ENCODE measurements at regions of chr18 and their contacts with region 1.

Region 1: DNA sequence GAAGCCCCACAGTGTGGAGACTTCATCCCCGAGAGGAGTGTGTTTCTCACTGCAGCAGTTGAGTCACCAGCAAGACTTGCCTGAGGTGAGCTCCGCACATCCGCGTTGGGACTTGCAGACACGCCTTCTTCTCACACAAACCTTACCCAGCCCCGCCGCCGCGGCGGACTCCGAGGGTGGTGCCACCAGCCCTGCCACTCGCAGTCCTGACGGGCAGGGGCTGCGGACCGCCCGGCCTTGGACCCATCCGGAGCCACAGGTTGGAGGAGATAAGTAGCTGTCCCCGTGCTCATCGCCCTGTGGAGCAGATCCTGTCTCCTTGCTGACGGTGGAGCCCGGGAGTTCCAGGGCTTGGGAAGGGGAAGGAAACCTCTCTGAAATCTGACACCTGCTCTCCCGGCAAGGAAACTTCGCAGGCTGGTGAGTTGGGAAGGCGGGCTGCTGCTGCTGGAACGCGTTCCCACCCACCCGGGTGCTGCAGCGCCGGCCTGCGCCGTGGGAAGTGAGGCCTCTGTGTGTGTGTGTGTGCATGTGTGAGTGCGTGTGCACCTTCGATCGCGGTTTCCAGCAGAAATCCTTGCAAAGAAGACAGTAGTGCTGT is at the start of gene RAB27B:
- DNase-seq: peak; percentile 94
- H3K4me3 Mint-ChIP-seq: peak within 1 kb of the TSS; percentile 92
- H3K27ac Mint-ChIP-seq: peak within 1 kb of the TSS; percentile 75
- H3K4me1 Mint-ChIP-seq: peaks cover 60% of the 10 kb centered on the region
- H3K27me3 Mint-ChIP-seq: no peaks in the 10 kb centered on the region
- CTCF ChIP-seq: no peak
- total RNA-seq, gene RAB27B: 32.2 and 73.5 TPM in 2 replicates

Region 2: DNA sequence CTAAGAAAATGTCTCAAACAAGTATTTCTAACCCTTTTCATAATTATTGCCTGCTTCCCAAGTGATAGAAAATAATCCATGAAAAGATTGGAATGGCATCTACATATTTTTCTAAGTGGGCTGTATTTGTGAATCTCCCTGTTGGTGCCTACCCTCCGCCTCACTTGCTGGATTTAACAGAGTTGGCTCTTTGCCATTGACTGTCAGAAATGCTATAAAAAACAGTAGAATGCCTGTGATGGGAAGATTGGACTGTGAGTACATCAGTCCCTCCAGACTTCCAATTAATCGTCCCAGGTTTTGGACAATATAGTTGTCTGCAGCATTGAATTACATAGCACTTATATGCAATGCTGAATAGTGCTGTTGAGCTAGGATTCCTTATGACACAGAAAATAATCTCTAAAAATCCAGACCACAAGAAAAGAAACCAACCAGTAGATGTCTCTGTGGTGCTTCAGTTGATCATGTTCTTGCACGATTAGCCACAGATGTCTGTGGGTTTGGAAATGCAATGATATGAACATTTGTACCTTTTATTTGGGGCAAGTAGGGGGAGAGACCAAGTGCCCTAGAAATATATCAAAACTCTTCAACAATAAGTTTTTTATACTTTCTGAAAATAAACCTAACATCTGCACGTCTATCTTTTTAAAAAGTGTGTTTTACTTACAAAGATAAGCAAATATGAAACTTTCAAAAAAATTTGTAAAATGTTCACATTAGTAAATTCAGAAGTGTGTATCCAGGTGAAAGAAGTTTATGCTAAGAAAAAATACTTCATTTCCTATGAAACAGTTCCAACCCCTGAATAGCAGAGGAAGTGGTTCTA is 148.8 kb before region 1 on chr18:
- CTCF ChIA-PET with region 1: no interaction called
- POLR2A ChIA-PET with region 1: interaction called, 4 read pairs
- intact Hi-C with region 1: loop called (anchors 1 kb)
- DNase-seq: peak; percentile 82
- H3K4me3 Mint-ChIP-seq: no peak overlapping the region
- H3K27ac Mint-ChIP-seq: no peak overlapping the region
- H3K4me1 Mint-ChIP-seq: peaks cover 7% of the 10 kb centered on the region
- H3K27me3 Mint-ChIP-seq: no peaks in the 10 kb centered on the region
- CTCF ChIP-seq: peak; percentile 66

Region 3: GRCh38 chr18:54702686-54703085 is 125.7 kb before region 1 on chr18:
- CTCF ChIA-PET with region 1: no interaction called
- POLR2A ChIA-PET with region 1: no interaction called
- intact Hi-C with region 1: no loop called
- DNase-seq: no peak
- H3K4me3 Mint-ChIP-seq: no peak overlapping the region
- H3K27ac Mint-ChIP-seq: peak overlapping the region; percentile 49
- H3K4me1 Mint-ChIP-seq: peaks cover 5% of the 10 kb centered on the region
- H3K27me3 Mint-ChIP-seq: no peaks in the 10 kb centered on the region
- CTCF ChIP-seq: no peak

Region 4: GRCh38 chr18:54717673-54718407 is 110.5 kb before region 1 on chr18:
- CTCF ChIA-PET with region 1: interaction called, 3 read pairs
- POLR2A ChIA-PET with region 1: interaction called, 33 read pairs
- intact Hi-C with region 1: loop called (anchors 10 kb)
- DNase-seq: no peak
- H3K4me3 Mint-ChIP-seq: no peak overlapping the region
- H3K27ac Mint-ChIP-seq: no peak overlapping the region
- H3K4me1 Mint-ChIP-seq: peaks cover 4% of the 10 kb centered on the region
- H3K27me3 Mint-ChIP-seq: no peaks in the 10 kb centered on the region
- CTCF ChIP-seq: no peak

Region 5: DNA sequence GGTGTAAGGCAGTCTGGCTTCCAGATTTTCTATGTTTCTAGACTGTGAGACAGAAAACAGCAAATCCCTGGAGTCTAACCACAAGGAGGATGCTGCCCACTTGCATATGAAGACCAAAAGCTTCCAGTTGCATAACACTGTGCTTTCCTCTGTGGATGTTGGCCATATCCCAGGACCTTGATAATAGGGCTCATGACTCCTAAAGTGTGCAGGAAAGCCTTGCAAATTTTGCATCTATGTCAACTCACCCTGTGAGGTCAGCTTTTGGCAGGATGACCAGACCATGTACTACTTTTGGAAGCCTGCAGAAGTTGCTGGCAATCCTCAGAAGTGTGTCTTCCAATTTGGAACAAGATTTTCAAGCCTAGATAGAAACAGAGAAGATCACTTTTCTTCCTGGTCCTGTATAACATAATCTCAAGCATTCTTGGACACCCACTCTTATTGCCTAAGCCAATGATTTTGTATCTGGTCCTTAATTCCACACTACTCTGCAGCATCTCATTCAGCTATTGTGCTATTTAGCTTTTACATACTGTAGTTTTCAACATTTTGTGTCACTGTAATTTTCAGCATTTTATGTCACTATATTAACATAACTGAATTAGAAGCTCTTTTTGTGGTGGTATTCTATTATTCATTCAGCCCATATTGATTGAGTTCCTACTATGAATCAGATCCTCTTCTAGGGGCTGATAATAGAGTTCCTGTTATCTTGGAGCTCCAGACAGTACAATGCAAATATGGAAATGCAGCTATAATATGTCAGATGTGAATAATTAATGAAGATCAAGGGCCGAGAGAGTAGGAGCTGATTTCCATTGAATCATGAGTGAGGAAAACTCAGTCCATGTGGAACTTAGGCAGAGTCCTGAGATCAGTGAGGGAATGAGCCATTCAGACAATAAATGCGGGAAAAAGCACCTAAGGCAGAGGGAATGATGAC is 85.4 kb before region 1 on chr18:
- CTCF ChIA-PET with region 1: interaction called, 3 read pairs
- POLR2A ChIA-PET with region 1: interaction called, 42 read pairs
- intact Hi-C with region 1: no loop called
- DNase-seq: peak; percentile 99
- H3K4me3 Mint-ChIP-seq: no peak overlapping the region
- H3K27ac Mint-ChIP-seq: peak overlapping the region; percentile 69
- H3K4me1 Mint-ChIP-seq: peaks cover 45% of the 10 kb centered on the region
- H3K27me3 Mint-ChIP-seq: no peaks in the 10 kb centered on the region
- CTCF ChIP-seq: no peak

Region 6: DNA sequence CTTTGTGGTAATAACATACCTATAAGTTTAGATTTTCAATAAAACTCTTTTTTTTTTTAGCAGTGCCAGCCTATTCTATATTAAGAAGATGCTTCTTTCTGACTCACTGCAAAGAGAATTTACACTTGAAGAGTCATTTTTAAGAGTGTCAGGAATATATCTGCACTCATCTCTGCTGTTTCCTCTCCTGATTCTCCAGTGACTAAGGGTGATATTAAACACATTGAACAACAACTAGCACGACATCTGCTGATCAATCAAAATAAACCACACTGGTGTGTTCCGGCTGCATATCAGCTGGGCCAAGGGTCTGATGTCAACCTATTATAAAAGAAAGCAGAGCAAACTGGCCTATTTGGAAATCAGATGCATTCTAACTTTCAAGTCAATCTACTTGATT is 14.9 kb after region 1 on chr18:
- CTCF ChIA-PET with region 1: interaction called, 3 read pairs
- POLR2A ChIA-PET with region 1: interaction called, 14 read pairs
- intact Hi-C with region 1: no loop called
- DNase-seq: no peak
- H3K4me3 Mint-ChIP-seq: no peak overlapping the region
- H3K27ac Mint-ChIP-seq: no peak overlapping the region
- H3K4me1 Mint-ChIP-seq: peaks cover 8% of the 10 kb centered on the region
- H3K27me3 Mint-ChIP-seq: no peaks in the 10 kb centered on the region
- CTCF ChIP-seq: no peak

Region 7: DNA sequence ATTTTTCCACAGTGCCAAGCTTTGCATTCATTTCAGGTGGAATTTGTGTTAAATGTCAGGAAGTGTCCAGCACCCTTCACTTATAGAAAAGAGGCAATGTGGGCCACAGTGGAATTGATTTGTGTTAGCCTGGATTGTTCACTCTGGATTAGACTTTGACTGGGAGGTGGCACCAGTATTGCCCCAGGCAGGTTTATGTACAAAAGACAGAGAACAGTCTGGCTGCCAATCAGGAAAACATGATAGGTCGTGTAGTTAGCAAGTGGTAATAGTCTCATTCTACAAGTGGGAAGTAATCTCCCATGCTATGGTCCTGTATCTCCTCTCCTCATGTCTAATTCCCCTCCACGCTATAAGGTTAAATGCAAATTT is 45.5 kb after region 1 on chr18:
- CTCF ChIA-PET with region 1: no interaction called
- POLR2A ChIA-PET with region 1: interaction called, 12 read pairs
- intact Hi-C with region 1: no loop called
- DNase-seq: peak; percentile 22
- H3K4me3 Mint-ChIP-seq: no peak overlapping the region
- H3K27ac Mint-ChIP-seq: peak overlapping the region; percentile 67
- H3K4me1 Mint-ChIP-seq: peaks cover 12% of the 10 kb centered on the region
- H3K27me3 Mint-ChIP-seq: no peaks in the 10 kb centered on the region
- CTCF ChIP-seq: no peak

Region 8: DNA sequence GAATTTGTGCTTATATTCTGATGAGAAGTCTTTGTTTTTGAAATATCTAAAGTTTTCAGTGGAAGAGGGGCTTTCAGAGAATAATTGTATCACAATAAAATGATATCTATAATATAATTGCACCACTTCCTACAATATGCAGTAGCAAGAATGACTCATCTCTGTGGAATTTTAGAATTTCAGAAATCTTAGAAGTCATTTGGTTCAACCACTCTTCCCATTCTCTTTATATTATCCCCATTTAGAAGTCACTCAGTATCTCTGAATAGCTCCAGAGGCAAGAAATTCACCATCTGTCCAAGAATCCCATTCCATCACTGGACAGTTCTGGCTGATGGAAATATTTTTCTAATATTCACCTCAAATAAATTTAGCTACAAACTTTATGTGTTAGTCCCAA is 190.2 kb after region 1 on chr18:
- CTCF ChIA-PET with region 1: no interaction called
- POLR2A ChIA-PET with region 1: no interaction called
- intact Hi-C with region 1: no loop called
- DNase-seq: peak; percentile 29
- H3K4me3 Mint-ChIP-seq: no peak overlapping the region
- H3K27ac Mint-ChIP-seq: no peak overlapping the region
- H3K4me1 Mint-ChIP-seq: peaks cover 7% of the 10 kb centered on the region
- H3K27me3 Mint-ChIP-seq: no peaks in the 10 kb centered on the region
- CTCF ChIP-seq: no peak

Region 9: GRCh38 chr18:55189972-55190371 is 361.6 kb after region 1 on chr18:
- CTCF ChIA-PET with region 1: no interaction called
- POLR2A ChIA-PET with region 1: no interaction called
- intact Hi-C with region 1: no loop called
- DNase-seq: no peak
- H3K4me3 Mint-ChIP-seq: no peak overlapping the region
- H3K27ac Mint-ChIP-seq: no peak overlapping the region
- H3K4me1 Mint-ChIP-seq: no peaks in the 10 kb centered on the region
- H3K27me3 Mint-ChIP-seq: peaks cover 17% of the 10 kb centered on the region
- CTCF ChIP-seq: no peak

Measured in MCF 10A (cell line).